Dendritic cell treated with granulocyte-macrophage colony-stimulating factor and Interleukin-4, amounts not matched to agents 40 ng/mL and 50 ng/mL, for 4 days (primary cell): ENCODE measurements at regions of chr5 and their contacts with region 1.

Region 1: DNA sequence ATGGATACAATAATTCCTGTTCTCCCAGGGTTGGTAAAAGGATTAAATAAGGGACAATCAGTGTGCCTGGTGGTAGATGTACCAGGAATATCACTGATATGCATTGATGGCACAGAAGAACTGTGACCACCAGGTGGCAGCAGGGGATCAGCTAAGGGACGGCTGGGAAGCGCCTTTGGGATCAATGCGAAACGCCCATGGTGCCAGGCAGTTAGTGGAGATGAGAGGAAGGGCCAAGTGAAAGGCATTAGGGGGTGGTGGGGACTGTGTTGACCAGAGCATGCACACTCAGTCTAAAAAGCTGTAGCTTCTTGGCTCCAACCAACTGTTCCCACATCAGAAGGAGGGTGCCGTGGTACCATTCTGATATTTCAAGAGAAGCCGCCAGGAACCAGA is 55.6 kb downstream of the ARHGEF37 start:
- H3K4me3 Mint-ChIP-seq: no peak overlapping the region
- H3K27ac Mint-ChIP-seq: no peak overlapping the region
- H3K4me1 Mint-ChIP-seq: peaks cover 24% of the 10 kb centered on the region
- H3K27me3 Mint-ChIP-seq: no peaks in the 10 kb centered on the region

Region 2: DNA sequence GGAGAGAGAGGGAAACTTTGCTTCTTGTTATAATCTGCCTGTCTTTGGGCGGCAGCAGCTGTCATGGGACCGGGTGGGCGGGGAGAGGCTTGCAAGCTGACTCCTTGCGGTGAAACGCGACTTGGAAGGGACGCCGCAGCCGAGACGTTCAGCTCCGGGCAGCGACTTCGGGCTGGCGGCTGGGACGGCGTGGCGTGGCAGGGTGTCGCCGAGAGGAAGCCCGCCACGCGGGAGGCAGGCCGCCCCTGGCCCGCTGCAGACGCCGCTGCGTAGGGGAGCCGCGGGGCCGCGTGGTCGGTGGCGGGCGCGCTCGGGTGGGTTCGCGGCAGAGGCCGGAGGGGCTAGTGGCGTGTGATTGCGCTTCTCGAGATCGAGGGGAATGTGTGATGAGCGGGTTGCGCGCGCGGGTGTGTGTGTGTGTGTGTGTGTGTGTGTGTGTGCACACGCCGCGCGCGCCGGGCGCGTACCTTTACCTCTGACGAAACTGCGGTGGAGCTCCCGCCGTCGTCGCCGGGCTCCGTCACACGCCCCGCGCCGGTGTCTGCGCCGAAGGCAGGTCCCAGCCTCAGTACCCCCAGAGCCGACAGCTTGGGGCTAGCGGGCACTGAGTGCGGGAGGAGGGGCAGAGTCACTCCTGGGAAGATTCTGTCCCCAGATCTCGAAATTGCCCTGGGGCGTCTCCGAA is 94.9 kb after region 1 on chr5:
- intact Hi-C with region 1: no loop called
- H3K4me3 Mint-ChIP-seq: peak overlapping the region; percentile 91
- H3K27ac Mint-ChIP-seq: peak overlapping the region; percentile 95
- H3K4me1 Mint-ChIP-seq: peaks cover 48% of the 10 kb centered on the region
- H3K27me3 Mint-ChIP-seq: no peaks in the 10 kb centered on the region

Region 3: DNA sequence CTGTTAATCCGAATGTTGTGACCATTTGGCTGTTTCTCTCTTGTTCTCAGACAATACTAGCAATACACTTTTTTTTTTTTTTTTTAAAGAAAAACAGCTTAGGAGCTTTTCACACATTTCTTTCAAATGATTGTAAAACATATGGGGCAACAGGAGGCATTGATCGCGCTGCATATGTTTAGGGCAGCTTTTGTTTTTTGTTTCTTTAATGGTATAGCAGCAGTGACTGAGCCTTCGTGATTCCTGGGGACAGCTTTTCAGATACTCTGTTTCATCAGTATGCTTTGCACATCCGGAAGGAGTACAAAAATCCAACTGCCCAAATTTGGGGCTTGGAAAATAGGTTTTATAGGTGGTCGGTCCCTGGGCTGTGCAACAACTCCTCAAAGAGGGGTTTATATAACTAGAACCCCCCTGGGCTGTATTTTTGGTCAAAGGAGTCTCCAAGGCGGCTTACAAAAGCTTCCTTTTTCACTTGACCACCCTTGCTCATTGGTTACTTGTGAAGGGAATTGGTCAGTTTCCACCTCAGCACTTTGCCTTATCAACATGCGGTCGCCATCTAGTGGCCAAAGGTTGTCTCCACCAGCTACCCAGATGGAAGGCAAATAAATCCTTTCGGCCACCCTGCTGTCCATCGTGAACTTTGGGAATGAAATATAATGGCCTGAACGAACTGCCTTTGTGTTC is 215.9 kb after region 1 on chr5:
- intact Hi-C with region 1: loop called (anchors 5 kb)
- H3K4me3 Mint-ChIP-seq: no peak overlapping the region
- H3K27ac Mint-ChIP-seq: no peak overlapping the region
- H3K4me1 Mint-ChIP-seq: peaks cover 9% of the 10 kb centered on the region
- H3K27me3 Mint-ChIP-seq: no peaks in the 10 kb centered on the region

Region 4: DNA sequence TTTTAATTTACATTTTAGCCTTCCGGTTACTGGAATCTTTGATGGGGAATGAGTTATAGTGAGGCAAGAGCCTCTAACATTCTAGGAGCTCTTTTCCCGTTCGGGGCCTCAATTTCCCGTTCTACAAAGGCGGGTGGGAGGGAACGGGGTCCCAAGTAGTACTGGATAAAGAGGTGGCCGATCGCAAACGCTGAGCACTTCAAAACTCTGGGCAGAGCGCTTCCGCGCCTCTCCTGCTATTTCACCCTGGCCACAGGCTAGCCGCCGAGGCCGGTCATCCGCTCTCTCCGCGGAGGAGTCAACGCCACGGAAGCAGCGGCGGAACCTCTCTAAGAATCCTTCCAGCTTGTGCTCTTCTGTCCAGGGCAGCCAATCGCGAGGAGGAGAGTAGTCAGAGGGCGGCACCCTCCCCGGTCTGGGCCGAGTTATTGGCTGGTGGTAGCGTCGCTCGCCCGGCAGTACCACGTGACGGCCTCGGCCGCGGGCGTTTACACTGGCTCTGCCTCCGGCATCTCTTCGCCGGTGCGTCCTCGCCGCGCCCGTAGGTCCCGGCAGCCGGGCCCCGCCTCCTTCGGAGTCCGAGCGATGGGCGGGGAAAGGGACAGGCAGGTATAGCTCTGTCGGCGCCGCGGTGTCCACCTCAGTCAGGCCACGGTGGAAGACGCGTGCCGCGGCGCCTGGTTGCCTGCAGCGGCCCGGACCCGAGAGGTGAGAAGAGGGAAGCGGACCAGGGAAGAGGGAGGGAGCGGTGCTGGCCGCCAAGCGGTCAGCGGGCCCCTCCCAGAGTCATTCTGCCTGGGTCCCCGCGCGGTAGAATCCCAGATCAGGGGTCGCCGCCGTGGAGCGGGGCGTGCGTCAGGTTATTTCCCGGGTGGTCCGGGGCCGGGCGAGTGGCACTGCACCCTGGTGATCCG is 323.7 kb after region 1 on chr5 and contains the start of gene SLC26A2:
- intact Hi-C with region 1: loop called (anchors 10 kb)
- H3K4me3 Mint-ChIP-seq: peak within 1 kb of the TSS; percentile 97
- H3K27ac Mint-ChIP-seq: peak within 1 kb of the TSS; percentile 93
- H3K4me1 Mint-ChIP-seq: peaks cover 37% of the 10 kb centered on the region
- H3K27me3 Mint-ChIP-seq: no peaks in the 10 kb centered on the region

Region 5: DNA sequence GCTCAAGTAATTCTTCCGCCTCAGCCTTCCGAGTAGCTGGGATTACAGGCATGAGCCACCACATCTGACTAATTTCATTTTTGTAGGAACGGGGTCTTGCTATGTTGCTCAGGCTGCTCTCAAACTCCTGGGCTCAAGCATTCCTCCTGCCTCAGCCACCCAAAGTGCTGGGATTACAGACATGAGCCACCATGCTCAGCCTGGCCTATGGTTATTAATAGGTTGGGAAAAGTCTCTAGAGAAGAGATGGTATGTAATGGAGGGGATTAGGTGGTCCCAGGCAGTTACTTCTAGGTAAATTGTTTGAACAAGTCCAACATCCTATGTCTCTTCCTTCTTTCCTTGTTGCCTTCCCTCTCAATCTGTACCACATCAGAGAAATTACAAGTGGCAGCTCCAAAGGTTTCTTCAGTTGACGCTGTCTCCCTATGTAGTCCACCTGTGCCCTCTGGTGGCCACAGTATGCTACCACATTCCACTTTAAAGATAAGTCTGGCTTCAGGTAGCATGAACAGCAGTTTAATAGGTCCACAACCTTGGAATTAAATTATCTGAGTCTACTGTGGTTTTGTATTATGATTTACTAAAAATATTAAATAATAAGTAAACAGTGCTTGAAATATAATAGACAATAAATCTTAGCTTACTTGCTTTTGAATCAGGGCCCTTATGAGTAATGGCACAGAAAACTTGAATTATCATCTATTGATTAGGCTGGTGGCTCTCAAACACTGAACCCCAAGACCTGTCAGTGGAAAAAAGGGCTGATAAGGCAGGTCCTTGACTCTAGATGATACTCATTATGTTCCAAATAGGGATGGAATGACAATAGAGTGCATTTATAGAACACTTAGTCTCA is 353.9 kb after region 1 on chr5:
- intact Hi-C with region 1: loop called (anchors 1 kb)
- H3K4me3 Mint-ChIP-seq: no peak overlapping the region
- H3K27ac Mint-ChIP-seq: no peak overlapping the region
- H3K4me1 Mint-ChIP-seq: peaks cover 3% of the 10 kb centered on the region
- H3K27me3 Mint-ChIP-seq: no peaks in the 10 kb centered on the region